A673 (cell line): ENCODE measurements at regions of chr1 and their contacts with region 1.

Region 1: DNA sequence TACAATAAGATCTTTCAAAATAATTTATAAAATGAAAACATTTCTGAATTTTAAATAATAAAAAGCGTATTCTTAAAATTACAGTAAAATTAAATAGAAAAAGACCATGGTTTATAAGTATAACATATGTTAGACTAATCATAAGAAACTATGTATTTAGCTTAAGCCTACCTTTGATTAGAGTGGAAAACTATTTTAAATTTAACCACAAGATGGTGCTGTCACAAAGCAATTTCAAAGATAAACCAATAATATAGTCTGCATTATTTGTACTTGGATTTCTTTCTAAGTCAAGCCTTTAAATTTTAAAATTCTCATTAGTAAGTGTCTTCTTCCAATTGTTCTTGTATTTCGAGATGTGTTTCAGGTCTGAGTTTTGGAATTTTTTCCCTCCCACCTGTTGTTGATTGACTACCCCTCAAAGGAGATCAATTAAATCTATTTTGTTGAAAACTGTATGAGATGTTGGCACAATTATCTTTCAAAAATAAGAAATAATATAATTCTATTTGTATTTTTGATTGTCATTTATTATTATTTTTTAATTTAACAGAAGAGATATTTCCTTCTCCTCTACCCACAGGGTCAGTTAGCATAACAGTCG is 459.8 kb downstream of the KCNT2 start:
- DNase-seq: peak; percentile 53
- H3K4me3 ChIP-seq: no peak overlapping the region
- H3K27ac ChIP-seq: no peak overlapping the region
- H3K4me1 ChIP-seq: no peaks in the 10 kb centered on the region
- H3K27me3 ChIP-seq: no peaks in the 10 kb centered on the region
- CTCF ChIP-seq: peak; percentile 69

Region 2: DNA sequence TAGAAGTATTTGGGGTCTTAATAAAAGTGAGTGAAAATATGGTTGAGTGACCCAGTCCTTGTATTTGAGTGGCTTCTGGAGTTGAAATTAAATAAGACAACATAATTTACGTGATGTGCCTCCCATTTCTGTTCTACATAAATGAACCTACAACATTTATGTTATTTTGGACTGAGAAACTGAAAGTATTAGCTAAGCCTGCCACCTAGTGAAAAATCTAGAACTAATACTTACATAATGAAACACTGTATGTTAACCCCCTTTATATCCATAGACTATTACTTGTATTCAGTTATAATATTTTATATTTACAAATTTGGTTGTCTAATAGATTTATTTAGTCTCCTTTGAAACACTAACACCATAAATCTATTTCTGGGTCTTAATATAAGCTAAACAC is 160.9 kb after region 1 on chr1:
- CTCF ChIA-PET with region 1: interaction called, 4 read pairs
- POLR2A ChIA-PET with region 1: no interaction called
- intact Hi-C with region 1: loop called (anchors 1 kb)
- DNase-seq: peak; percentile 54
- H3K4me3 ChIP-seq: no peak overlapping the region
- H3K27ac ChIP-seq: no peak overlapping the region
- H3K4me1 ChIP-seq: no peaks in the 10 kb centered on the region
- H3K27me3 ChIP-seq: no peaks in the 10 kb centered on the region
- CTCF ChIP-seq: peak; percentile 54

Region 3: GRCh38 chr1:196372896-196373536 is 224.5 kb after region 1 on chr1:
- CTCF ChIA-PET with region 1: no interaction called
- POLR2A ChIA-PET with region 1: no interaction called
- intact Hi-C with region 1: loop called (anchors 5 kb)
- DNase-seq: peak; percentile 47
- H3K4me3 ChIP-seq: no peak overlapping the region
- H3K27ac ChIP-seq: no peak overlapping the region
- H3K4me1 ChIP-seq: no peaks in the 10 kb centered on the region
- H3K27me3 ChIP-seq: no peaks in the 10 kb centered on the region
- CTCF ChIP-seq: peak; percentile 68

Region 4: GRCh38 chr1:196660852-196661251 is 512.4 kb after region 1 on chr1:
- CTCF ChIA-PET with region 1: interaction called, 5 read pairs
- POLR2A ChIA-PET with region 1: no interaction called
- intact Hi-C with region 1: loop called (anchors 2 kb)
- DNase-seq: peak; percentile 51
- H3K4me3 ChIP-seq: no peak overlapping the region
- H3K27ac ChIP-seq: no peak overlapping the region
- H3K4me1 ChIP-seq: no peaks in the 10 kb centered on the region
- H3K27me3 ChIP-seq: no peaks in the 10 kb centered on the region
- CTCF ChIP-seq: peak; percentile 63